ENCODE measurements at regions of chr4 and their contacts with region 1.

Region 1: DNA sequence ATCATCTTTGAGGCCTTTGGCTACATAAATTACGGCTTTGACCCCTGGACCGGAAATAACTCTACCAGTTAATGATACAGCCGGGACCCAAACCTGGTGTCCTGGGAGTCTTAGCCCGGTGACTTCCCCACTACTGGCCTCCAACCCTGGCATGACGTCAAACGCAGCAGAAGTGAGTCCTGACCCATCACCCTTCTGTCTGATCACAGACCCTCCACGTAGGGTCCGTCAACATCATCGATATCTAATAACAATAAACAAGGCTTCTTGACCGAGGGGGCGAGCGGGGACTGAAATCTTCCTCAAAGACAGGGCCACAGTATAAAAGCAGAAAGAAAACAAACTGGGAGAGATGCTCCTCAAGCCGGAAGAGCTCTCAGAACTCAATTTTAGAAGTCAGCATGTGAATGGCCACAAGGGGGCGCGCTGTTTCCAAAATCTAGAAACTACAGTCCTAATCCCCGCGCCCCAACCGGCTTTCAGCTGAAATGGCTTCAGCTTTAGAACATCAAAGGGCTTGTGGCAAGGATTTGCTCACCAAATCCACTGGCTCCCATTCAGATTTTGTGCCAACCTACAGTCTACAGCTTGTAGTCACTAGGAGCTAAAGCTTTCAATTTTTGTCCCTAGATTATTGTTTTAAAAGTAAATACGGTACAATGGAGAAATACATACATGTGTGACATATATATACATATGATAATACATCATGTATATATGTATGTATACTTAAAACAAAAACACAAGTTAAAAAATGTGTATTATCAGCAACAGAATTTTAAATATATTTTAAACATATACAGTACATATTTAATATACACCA is 46.4 kb upstream of the ENPP6 start:
- DNase-seq: peak; percentile 85
- H3K4me3 ChIP-seq: no peak overlapping the region
- H3K27ac ChIP-seq: no peak overlapping the region
- H3K4me1 ChIP-seq: peaks cover 23% of the 10 kb centered on the region
- H3K27me3 ChIP-seq: peaks cover 2 to 3% of the 10 kb centered on the region in 2 experiments
- CTCF ChIP-seq: peak; percentile 77 to 85
- POLR2A ChIP-seq: no peak

Region 2: GRCh38 chr4:184250795-184251669 is 13.1 kb before region 1 on chr4:
- CTCF ChIA-PET with region 1: interaction called, 39 read pairs
- POLR2A ChIA-PET with region 1: no interaction called
- dilution Hi-C with region 1: no loop called
- intact Hi-C with region 1: no loop called
- DNase-seq: peak; percentile 49
- H3K4me3 ChIP-seq: no peak overlapping the region
- H3K27ac ChIP-seq: no peak overlapping the region
- H3K4me1 ChIP-seq: no peaks in the 10 kb centered on the region
- H3K27me3 ChIP-seq: peaks cover 0 to 3% of the 10 kb centered on the region in 2 experiments
- CTCF ChIP-seq: peak; percentile 47 to 49
- POLR2A ChIP-seq: no peak

Region 3: GRCh38 chr4:184384056-184384809 is 120.1 kb after region 1 on chr4:
- CTCF ChIA-PET with region 1: interaction called, 23 read pairs
- POLR2A ChIA-PET with region 1: no interaction called
- dilution Hi-C with region 1: no loop called
- intact Hi-C with region 1: loop called (anchors 1 kb)
- DNase-seq: peak; percentile 74
- H3K4me3 ChIP-seq: peak overlapping the region in 2 of 3 experiments; percentile 37 to 71
- H3K27ac ChIP-seq: peak overlapping the region; percentile 71
- H3K4me1 ChIP-seq: peaks cover 52% of the 10 kb centered on the region
- H3K27me3 ChIP-seq: no peaks in the 10 kb centered on the region
- CTCF ChIP-seq: no peak
- POLR2A ChIP-seq: no peak

Region 4: GRCh38 chr4:184548648-184549341 is 284.7 kb after region 1 on chr4:
- CTCF ChIA-PET with region 1: interaction called, 14 read pairs
- POLR2A ChIA-PET with region 1: no interaction called
- dilution Hi-C with region 1: no loop called
- intact Hi-C with region 1: no loop called
- DNase-seq: no peak
- H3K4me3 ChIP-seq: no peak overlapping the region
- H3K27ac ChIP-seq: no peak overlapping the region
- H3K4me1 ChIP-seq: peaks cover 7% of the 10 kb centered on the region
- H3K27me3 ChIP-seq: no peaks in the 10 kb centered on the region
- CTCF ChIP-seq: no peak
- POLR2A ChIP-seq: no peak

Region 5: GRCh38 chr4:184649026-184649970 is 385.2 kb after region 1 on chr4 and contains the starts of genes CASP3 and PRIMPOL:
- CTCF ChIA-PET with region 1: interaction called, 26 read pairs
- POLR2A ChIA-PET with region 1: interaction called, 4 read pairs
- dilution Hi-C with region 1: no loop called
- intact Hi-C with region 1: loop called (anchors 1 kb)
- DNase-seq: peak; percentile 97
- H3K4me3 ChIP-seq: peak within 1 kb of the TSS; percentile 49 to 89 (median 78)
- H3K27ac ChIP-seq: peak within 1 kb of the TSS; percentile 96
- H3K4me1 ChIP-seq: peaks cover 44% of the 10 kb centered on the region
- H3K27me3 ChIP-seq: no peaks in the 10 kb centered on the region
- CTCF ChIP-seq: peak in 1 of 2 donors; percentile 37
- POLR2A ChIP-seq: peak; percentile 87
- total RNA-seq, gene CASP3: 54.5 and 66.1 TPM in 2 replicates
- total RNA-seq, gene PRIMPOL: 11.1 and 13.6 TPM in 2 replicates

Region 6: DNA sequence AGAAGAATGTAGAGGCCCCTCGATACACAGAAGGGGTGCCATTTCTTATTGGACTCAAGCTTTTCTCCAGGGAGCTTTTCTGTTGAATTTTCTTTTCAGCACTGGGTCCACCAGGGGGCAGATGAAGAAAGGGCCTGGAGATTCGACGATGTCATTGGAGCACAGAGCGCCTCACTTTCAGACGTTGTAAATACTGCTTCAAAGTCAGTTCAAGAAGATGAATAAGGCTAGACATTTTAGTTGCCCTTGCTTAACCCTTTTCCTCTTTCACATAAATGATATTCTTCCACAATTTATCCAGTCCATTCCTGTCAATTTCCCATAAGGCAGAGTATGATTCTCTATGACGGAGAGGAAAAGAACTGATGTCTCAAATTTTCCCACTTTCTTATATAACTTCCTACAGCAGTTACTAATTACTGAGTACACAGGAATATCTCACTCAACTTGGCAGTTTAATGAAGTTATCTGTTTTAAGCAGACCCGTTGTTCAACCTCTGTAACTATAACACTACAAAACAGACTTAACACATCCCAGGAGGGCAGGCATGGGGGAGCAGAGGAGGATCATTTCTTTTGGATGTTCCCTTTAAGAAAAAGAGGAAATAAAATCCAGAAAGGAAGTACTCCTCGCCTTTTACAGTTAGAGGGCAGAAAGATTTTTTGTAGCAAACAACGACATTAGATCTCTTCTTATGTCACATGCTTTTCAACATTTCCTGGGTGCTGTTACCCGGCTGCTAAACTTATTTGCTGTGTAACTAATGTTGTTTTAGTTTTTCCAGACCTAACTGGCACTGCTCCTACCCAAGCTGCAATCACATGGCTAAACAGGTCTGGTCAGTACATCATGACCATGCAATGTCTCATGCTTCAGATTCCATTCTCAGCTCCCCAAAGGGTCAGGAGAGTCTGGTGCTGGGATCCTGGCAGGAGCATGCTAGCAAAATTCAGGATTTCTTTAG is 482.0 kb after region 1 on chr4:
- CTCF ChIA-PET with region 1: interaction called, 14 read pairs
- POLR2A ChIA-PET with region 1: no interaction called
- dilution Hi-C with region 1: no loop called
- intact Hi-C with region 1: no loop called
- DNase-seq: peak; percentile 76
- H3K4me3 ChIP-seq: no peak overlapping the region
- H3K27ac ChIP-seq: no peak overlapping the region
- H3K4me1 ChIP-seq: peaks cover 4% of the 10 kb centered on the region
- H3K27me3 ChIP-seq: no peaks in the 10 kb centered on the region
- CTCF ChIP-seq: peak; percentile 70 to 72
- POLR2A ChIP-seq: no peak